ENCODE measurements at regions of chr19 and their contacts with region 1.

Region 1: DNA sequence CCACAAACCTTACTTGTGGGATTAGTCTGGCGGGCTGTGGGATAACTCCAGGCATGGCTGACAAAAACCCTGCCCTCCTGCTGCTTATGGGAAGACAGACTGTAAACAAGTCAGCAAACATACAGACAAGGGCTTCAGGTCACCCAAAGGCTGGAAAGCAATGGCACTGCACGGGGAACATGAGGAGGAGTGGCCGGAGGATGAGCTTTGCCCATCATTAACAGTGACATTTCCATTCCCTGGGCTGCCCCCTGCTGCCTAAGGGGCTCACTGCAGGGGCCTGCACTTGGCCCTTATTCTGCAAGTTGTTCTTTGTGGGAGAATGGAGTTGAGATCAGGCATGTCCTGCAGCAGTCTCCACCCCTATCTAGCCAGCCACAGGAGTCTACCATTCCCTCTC is 91.3 kb downstream of the UQCRFS1 start:
- H3K4me3 ChIP-seq: no peak overlapping the region
- H3K27ac ChIP-seq: no peak overlapping the region
- H3K4me1 ChIP-seq: peaks cover 3% of the 10 kb centered on the region; the same call in 1 of the 2 replicates
- CTCF ChIP-seq: no peak

Region 2: DNA sequence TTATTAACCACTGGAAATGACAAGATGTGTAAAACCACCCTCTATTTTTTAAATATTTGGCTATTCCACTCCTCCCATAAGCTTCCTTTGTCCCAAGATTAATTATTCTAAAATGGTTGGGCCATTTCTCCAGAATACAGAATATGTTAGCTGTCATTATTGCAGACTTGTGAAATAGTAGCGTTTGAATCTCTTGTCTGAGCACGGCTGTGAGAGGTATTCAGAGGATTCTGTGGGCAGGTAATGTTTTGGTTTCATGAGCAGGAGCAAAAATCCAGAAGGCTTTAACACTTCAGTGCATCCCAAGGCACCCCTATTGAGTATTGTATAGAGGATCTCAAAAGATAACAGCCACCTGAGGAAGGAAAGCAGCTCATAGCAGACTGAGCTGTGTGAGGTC is 164.7 kb before region 1 on chr19:
- CTCF ChIA-PET with region 1: no interaction called
- POLR2A ChIA-PET with region 1: no interaction called
- H3K4me3 ChIP-seq: no peak overlapping the region
- H3K27ac ChIP-seq: no peak overlapping the region
- H3K4me1 ChIP-seq: no peaks in the 10 kb centered on the region
- CTCF ChIP-seq: no peak

Region 3: DNA sequence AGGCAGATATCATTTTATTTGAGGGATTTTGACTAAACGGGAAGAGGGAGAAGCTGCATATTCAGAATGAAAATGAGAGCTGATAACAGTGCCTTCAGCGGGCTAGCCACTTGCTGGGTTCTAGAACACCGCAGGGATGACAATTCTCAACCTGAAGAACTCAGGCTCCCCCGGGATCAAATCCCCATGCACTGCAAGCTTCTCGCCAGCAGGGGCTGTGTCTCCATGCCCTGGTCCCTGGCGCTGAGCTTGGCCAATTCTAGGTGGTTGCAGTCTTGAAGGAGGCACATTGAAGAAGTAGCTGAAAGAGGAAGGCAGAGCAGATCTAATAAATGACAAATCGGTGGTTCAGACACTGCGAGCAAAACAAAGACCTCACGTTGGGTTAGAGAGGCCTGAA is 37.4 kb before region 1 on chr19:
- CTCF ChIA-PET with region 1: interaction called, 10 read pairs
- POLR2A ChIA-PET with region 1: no interaction called
- H3K4me3 ChIP-seq: no peak overlapping the region
- H3K27ac ChIP-seq: no peak overlapping the region
- H3K4me1 ChIP-seq: no peaks in the 10 kb centered on the region
- CTCF ChIP-seq: peak; percentile 57; the same call in 1 of the 2 replicates

Region 4: GRCh38 chr19:29111576-29111975 is 10.1 kb before region 1 on chr19:
- CTCF ChIA-PET with region 1: interaction called, 24 read pairs
- POLR2A ChIA-PET with region 1: no interaction called
- H3K4me3 ChIP-seq: no peak overlapping the region
- H3K27ac ChIP-seq: no peak overlapping the region
- H3K4me1 ChIP-seq: no peaks in the 10 kb centered on the region
- CTCF ChIP-seq: no peak

Measured in HEK293 (cell line).